ENCODE measurements at regions of chr12 and their contacts with region 1.

Region 1: GRCh38 chr12:50842637-50843493 is at the start of gene TMPRSS12:
- DNase-seq: peak in 1 of 2 donors; percentile 16
- ATAC-seq: peak in 6 of 8 donors; percentile 12 to 64 (median 44)
- H3K4me3 ChIP-seq: peak within 1 kb of the TSS in 8 of 10 donors; percentile 22 to 49 (median 36)
- H3K27ac ChIP-seq: no peak within 1 kb of the TSS
- H3K4me1 ChIP-seq: peaks cover 0 to 9% (median 0%) of the 10 kb centered on the region in 9 donors
- H3K27me3 ChIP-seq: peaks cover 0 to 16% (median 6%) of the 10 kb centered on the region in 7 donors
- CTCF ChIP-seq: peak in 1 of 9 donors; percentile 31
- total RNA-seq, gene TMPRSS12: not detected

Region 2: DNA sequence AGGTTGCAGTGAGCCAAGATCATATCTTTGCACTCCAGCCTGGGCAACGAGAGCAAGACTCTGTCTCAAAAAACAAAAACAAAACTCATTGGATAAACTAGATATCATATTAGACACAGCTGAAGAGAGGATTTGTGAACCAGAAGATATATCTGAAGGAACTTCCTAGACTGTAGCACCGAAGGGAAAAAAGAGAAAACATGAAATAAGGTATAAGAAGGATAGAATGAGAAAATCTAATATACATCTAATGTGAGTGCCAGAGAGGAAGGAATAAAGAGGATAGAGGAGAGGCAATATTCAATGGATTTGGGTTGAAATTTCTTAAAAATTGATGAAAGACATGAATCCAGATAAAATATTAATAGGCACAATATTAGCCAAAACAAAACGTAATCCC is 22.4 kb after region 1 on chr12:
- intact Hi-C with region 1: no loop called
- DNase-seq: no peak
- ATAC-seq: no peak
- H3K4me3 ChIP-seq: no peak overlapping the region
- H3K27ac ChIP-seq: no peak overlapping the region
- H3K4me1 ChIP-seq: no peaks in the 10 kb centered on the region
- H3K27me3 ChIP-seq: no peaks in the 10 kb centered on the region
- CTCF ChIP-seq: no peak

Region 3: DNA sequence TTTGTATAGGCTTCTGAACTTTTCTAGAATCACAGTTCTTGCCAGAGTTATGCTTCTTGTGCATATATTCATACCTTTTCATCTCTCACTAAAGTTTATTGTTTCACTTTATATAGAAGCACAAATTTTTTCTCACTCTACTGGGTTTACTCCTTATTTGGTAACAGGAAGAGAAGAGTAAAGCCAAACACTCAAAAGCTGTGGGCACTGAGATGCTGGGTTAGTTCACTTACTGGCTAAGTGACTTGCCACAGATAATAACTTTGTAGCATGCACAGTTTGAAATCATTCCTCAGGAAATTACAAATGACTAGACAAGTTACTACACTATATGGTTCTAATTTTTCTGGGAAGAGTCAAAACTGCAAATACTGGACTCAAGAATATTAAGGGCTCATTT is 117.3 kb after region 1 on chr12:
- intact Hi-C with region 1: loop called in 1 of 10 experiments (anchors 10 kb)
- DNase-seq: no peak
- ATAC-seq: no peak
- H3K4me3 ChIP-seq: no peak overlapping the region
- H3K27ac ChIP-seq: no peak overlapping the region
- H3K4me1 ChIP-seq: no peaks in the 10 kb centered on the region
- H3K27me3 ChIP-seq: no peaks in the 10 kb centered on the region
- CTCF ChIP-seq: no peak

Region 4: GRCh38 chr12:51341259-51342007 is 498.6 kb after region 1 on chr12:
- intact Hi-C with region 1: loop called in 1 of 10 experiments (anchors 10 kb)
- DNase-seq: peak in 1 of 2 donors; percentile 59
- ATAC-seq: peak; percentile 72 to 90 (median 86)
- H3K4me3 ChIP-seq: peak overlapping the region in 5 of 10 donors; percentile 21 to 33 (median 28)
- H3K27ac ChIP-seq: peak overlapping the region in 1 of 10 donors; percentile 56
- H3K4me1 ChIP-seq: peaks cover 0 to 9% (median 4%) of the 10 kb centered on the region in 9 donors
- H3K27me3 ChIP-seq: no peaks in the 10 kb centered on the region
- CTCF ChIP-seq: peak; percentile 84 to 98 (median 97)